ENCODE measurements at regions of chr3 and their contacts with region 1.

Region 1: GRCh38 chr3:122642935-122643334 is 37.7 kb upstream of the PARP14 start:
- DNase-seq: no peak
- H3K4me3 Mint-ChIP-seq: peak overlapping the region; percentile 28
- H3K27ac Mint-ChIP-seq: peak overlapping the region; percentile 74
- H3K4me1 Mint-ChIP-seq: peaks cover 41% of the 10 kb centered on the region
- H3K27me3 Mint-ChIP-seq: no peaks in the 10 kb centered on the region

Region 2: GRCh38 chr3:122609798-122610559 is 33.0 kb before region 1 on chr3:
- intact Hi-C with region 1: loop called (anchors 1 kb)
- DNase-seq: peak; percentile 31
- H3K4me3 Mint-ChIP-seq: peak overlapping the region; percentile 58
- H3K27ac Mint-ChIP-seq: peak overlapping the region; percentile 89
- H3K4me1 Mint-ChIP-seq: peaks cover 20% of the 10 kb centered on the region
- H3K27me3 Mint-ChIP-seq: no peaks in the 10 kb centered on the region

Region 3: GRCh38 chr3:122668930-122669730 is 26.2 kb after region 1 on chr3:
- intact Hi-C with region 1: loop called (anchors 2 kb)
- DNase-seq: no peak
- H3K4me3 Mint-ChIP-seq: no peak overlapping the region
- H3K27ac Mint-ChIP-seq: peak overlapping the region; percentile 80
- H3K4me1 Mint-ChIP-seq: peaks cover 14% of the 10 kb centered on the region
- H3K27me3 Mint-ChIP-seq: peaks cover 2% of the 10 kb centered on the region

Region 4: DNA sequence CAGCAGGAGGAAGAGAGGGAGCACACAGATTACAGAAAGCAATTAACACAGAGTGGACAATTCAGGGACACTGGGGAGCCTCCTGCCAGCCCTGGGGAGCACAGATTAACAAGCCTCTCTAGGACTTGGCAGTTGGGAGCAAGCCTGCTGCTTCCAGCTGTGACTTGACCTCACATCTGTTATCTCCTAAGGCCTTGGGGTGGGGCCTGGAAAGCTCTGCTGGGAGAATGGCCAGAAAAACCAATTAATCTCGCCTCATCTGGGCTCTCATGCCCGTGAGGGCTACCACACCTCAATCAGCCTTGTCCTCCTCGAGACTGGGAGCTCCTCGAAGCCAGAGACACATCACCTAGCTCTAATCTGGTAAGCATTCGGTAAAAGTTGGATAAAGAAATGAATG is 345.6 kb after region 1 on chr3:
- intact Hi-C with region 1: no loop called
- DNase-seq: no peak
- H3K4me3 Mint-ChIP-seq: no peak overlapping the region
- H3K27ac Mint-ChIP-seq: no peak overlapping the region
- H3K4me1 Mint-ChIP-seq: no peaks in the 10 kb centered on the region
- H3K27me3 Mint-ChIP-seq: peaks cover 37% of the 10 kb centered on the region

Measured in activated T-helper 1 cell treated with anti-CD3 and anti-CD28 coated beads, Interleukin-12 subunit alpha, Interleukin-12 subunit beta, Interleukin-2, Interleukin-4 antibody, amounts not matched to agents 30 ng/mL and 10 ng/mL and 1 ng/mL, durations not matched to agents 14 hours and 24 hours and 36 hours (primary cell).